ENCODE measurements at regions of chr2 and their contacts with region 1.

Region 1: DNA sequence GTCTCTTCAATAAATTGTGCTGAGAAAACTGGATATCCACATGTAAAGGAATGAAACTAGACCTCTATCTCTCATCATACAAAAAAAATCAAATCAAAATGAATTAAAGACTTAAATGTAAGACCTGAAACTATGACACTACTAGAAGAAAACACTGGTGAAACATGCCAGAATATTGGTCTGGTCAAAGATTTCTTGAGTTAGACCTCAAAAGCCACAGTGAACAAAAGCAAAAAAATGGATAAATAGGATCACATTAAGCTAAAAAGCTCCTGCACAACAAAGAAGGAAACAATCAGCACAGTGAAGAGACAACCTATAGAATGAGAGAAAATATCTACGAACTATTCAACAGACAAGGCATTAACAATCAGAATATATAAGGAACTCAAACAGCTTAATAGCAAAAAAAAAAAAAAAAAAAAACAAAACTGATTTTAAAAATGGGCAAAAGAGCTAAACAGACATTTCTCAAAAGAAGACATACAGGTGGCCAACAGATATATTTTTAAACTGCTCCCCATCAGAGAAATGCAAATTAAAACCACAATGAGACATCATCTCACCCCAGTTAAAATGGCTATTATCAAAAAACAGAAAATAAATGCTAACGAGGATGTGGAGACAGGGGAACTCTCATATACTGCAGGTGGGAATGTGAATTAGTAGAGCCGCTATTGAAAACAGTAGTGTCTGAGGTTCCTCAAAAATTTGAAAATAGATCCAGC is 66.3 kb downstream of the NCKAP1 start:
- DNase-seq: no peak
- H3K4me3 ChIP-seq: no peak overlapping the region
- H3K27ac ChIP-seq: no peak overlapping the region
- H3K4me1 ChIP-seq: peaks cover 0 to 19% (median 5%) of the 10 kb centered on the region in 4 donors
- H3K27me3 ChIP-seq: no peaks in the 10 kb centered on the region
- CTCF ChIP-seq: no peak
- EP300 ChIP-seq: no peak
- POLR2A ChIP-seq: no peak

Region 2: DNA sequence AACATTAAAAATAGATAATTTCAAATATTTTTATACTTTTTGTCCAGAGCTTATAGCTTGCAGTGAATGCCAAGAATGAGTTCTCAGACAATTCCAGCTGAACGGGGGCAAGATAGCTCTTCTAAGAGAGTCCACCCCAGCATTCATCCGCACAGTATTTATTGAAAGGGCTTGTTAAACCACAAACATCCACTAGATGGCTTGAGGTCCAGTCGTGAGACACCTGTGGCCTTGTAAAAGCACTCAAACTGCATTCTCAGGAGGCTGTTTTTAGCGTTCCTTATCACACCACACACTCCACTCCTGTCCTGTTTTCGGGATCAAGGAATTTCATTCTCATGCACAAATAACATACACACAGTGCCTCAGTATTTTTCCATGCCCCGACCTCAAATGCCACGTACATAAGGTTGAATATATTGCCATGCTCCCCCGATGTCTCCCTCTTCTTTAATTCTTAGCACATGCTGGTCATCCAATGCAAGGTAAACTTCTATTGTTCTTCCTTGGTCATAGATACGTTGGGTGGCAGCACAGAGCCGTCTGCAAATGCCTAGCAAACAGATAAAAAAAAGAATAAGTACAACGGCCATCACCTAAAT is 208.6 kb before region 1 on chr2:
- in situ Hi-C with region 1: loop called in 1 of 4 experiments (anchors 25 kb)
- intact Hi-C with region 1: loop called (anchors 5 kb)
- DNase-seq: no peak
- H3K4me3 ChIP-seq: no peak overlapping the region
- H3K27ac ChIP-seq: peak overlapping the region in 1 of 4 donors; percentile 38
- H3K4me1 ChIP-seq: peaks cover 0 to 3% (median 0%) of the 10 kb centered on the region in 4 donors
- H3K27me3 ChIP-seq: no peaks in the 10 kb centered on the region
- CTCF ChIP-seq: peak; percentile 56 to 64 (median 61)
- EP300 ChIP-seq: no peak
- POLR2A ChIP-seq: no peak